CD4-positive, alpha-beta T cell (primary cell): ENCODE measurements at regions of chr6 and their contacts with region 1.

Region 1: DNA sequence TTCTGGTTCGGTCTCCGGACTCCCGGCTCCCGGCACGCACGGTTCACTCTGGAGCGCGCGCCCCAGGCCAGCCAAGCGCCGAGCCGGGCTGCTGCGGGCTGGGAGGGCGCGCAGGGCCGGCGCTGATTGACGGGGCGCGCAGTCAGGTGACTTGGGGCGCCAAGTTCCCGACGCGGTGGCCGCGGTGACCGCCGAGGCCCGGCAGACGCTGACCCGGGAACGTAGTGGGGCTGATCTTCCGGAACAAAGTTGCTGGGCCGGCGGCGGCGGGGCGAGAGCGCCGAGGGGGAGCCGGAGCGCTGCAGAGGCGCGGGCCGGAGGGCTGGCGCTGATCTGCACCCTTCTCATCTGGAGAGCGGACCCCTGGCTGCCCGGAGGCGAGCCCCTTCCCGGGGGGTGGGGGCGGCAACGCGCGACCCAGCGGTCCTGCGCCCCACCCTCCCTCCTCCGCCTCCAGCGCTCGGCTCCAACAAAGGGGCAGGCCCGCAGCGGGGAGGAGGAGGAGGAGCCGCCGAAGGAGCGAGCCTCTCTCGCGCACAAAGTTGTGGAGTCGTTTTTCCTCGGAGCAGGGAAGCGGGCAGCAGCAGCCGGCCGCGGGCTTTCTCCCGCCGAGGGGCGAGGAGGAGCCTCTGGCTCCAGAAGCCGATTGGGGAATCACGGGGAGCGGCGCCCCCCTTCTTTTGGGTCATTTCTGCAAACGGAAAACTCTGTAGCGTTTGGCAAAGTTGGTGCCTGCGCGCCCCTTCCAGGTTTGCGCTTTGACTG is at the start of gene UTRN:
- DNase-seq: peak in 10 of 14 experiments; percentile 4 to 63 (median 30)
- ATAC-seq: peak; percentile 52
- H3K4me3 ChIP-seq: peak within 1 kb of the TSS; percentile 91
- H3K4me3 Mint-ChIP-seq: peak within 1 kb of the TSS; percentile 95
- H3K27ac ChIP-seq: no peak within 1 kb of the TSS
- H3K27ac Mint-ChIP-seq: no peak within 1 kb of the TSS
- H3K4me1 ChIP-seq: peaks cover 23% of the 10 kb centered on the region
- H3K4me1 Mint-ChIP-seq: peaks cover 19% of the 10 kb centered on the region
- H3K27me3 ChIP-seq: no peaks in the 10 kb centered on the region
- H3K27me3 Mint-ChIP-seq: peaks cover 36% of the 10 kb centered on the region
- CTCF ChIP-seq: no peak
- total RNA-seq, gene UTRN: 143 to 153 TPM

Region 2: DNA sequence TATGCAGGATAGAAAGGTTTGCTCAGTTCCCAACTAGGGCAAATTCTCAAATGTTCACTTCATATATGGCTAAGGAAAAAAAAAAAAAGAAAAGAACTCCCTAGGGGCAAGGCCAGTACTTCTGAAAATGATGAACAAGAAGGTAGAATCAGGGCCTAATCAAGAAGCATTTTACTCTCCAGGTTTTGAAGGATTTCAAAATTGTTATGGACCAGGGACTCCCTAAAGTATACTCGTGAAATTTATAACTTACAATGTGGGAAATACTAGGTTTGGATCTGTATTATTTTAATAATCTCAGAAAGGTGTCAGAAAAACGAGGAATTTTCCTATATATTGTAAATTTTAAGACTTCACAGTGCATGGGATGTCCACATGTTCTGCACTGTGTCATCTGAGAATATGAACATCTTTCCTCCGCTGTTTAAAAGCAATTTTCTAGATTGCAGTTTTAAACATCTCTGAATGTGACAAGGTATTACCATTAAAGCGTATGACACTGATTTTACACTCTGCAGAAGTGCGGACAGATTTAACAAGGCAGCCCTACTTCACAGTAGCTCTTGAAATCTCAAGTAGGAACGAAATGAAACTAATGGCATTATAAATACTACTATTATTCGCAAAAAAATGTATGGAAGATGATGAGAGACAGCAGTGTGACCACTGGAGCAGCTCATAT is 290.9 kb before region 1 on chr6:
- CTCF ChIA-PET with region 1: no interaction called
- POLR2A ChIA-PET with region 1: no interaction called
- intact Hi-C with region 1: no loop called
- DNase-seq: no peak
- ATAC-seq: no peak
- H3K4me3 ChIP-seq: no peak overlapping the region
- H3K4me3 Mint-ChIP-seq: no peak overlapping the region
- H3K27ac ChIP-seq: no peak overlapping the region
- H3K27ac Mint-ChIP-seq: no peak overlapping the region
- H3K4me1 ChIP-seq: no peaks in the 10 kb centered on the region
- H3K4me1 Mint-ChIP-seq: no peaks in the 10 kb centered on the region
- H3K27me3 ChIP-seq: no peaks in the 10 kb centered on the region
- H3K27me3 Mint-ChIP-seq: no peaks in the 10 kb centered on the region
- CTCF ChIP-seq: no peak

Region 3: DNA sequence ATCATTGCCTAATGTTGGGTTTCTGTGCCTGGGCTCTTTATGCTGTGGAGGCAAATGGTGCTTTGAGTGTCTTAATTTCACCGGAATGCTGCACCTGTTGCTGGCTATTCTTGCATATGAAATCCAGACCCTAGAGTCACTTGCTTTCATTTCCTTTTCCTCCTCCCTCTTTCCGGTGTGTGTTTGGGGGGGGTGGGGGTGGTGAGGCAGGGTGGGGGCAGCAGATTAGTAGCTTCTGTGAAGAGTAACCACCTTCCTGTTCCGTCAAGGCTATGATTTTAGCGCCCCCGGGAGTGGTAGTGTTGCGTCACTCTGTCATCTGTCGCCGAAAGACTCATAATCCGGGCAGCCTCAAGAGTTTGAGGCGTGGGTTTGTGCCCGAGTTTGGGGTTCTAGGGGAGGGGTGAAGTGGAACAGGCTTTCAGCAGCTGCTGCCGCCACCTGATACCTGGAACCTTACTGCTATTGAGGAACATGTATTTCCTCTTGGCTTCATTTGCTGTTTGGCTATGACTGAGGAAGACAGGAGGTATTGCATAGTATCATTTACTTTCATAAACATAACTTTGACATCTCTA is 49.3 kb after region 1 on chr6:
- CTCF ChIA-PET with region 1: interaction called, 3 read pairs
- POLR2A ChIA-PET with region 1: no interaction called
- intact Hi-C with region 1: loop called (anchors 5 kb)
- DNase-seq: peak; percentile 37 to 93 (median 66)
- ATAC-seq: peak; percentile 93
- H3K4me3 ChIP-seq: peak overlapping the region; percentile 55
- H3K4me3 Mint-ChIP-seq: peak overlapping the region; percentile 85
- H3K27ac ChIP-seq: peak overlapping the region; percentile 44 to 75
- H3K27ac Mint-ChIP-seq: peak overlapping the region; percentile 85
- H3K4me1 ChIP-seq: peaks cover 36% of the 10 kb centered on the region
- H3K4me1 Mint-ChIP-seq: peaks cover 64% of the 10 kb centered on the region
- H3K27me3 ChIP-seq: no peaks in the 10 kb centered on the region
- H3K27me3 Mint-ChIP-seq: no peaks in the 10 kb centered on the region
- CTCF ChIP-seq: no peak

Region 4: GRCh38 chr6:144343701-144344428 is 58.9 kb after region 1 on chr6:
- CTCF ChIA-PET with region 1: interaction called, 3 read pairs
- POLR2A ChIA-PET with region 1: interaction called, 10 read pairs
- intact Hi-C with region 1: no loop called
- DNase-seq: peak in 11 of 14 experiments; percentile 30 to 91 (median 48)
- ATAC-seq: peak; percentile 74
- H3K4me3 ChIP-seq: peak overlapping the region; percentile 72
- H3K4me3 Mint-ChIP-seq: peak overlapping the region; percentile 88
- H3K27ac ChIP-seq: peak overlapping the region; percentile 56 to 75
- H3K27ac Mint-ChIP-seq: peak overlapping the region; percentile 89
- H3K4me1 ChIP-seq: peaks cover 58% of the 10 kb centered on the region
- H3K4me1 Mint-ChIP-seq: peaks cover 73% of the 10 kb centered on the region
- H3K27me3 ChIP-seq: no peaks in the 10 kb centered on the region
- H3K27me3 Mint-ChIP-seq: no peaks in the 10 kb centered on the region
- CTCF ChIP-seq: no peak

Region 5: GRCh38 chr6:144349690-144350527 is 64.9 kb after region 1 on chr6:
- CTCF ChIA-PET with region 1: interaction called, 3 read pairs
- POLR2A ChIA-PET with region 1: no interaction called
- intact Hi-C with region 1: loop called in 1 of 2 experiments (anchors 5 kb)
- DNase-seq: peak in 4 of 14 experiments; percentile 19 to 71 (median 62)
- ATAC-seq: peak; percentile 65
- H3K4me3 ChIP-seq: peak overlapping the region; percentile 42
- H3K4me3 Mint-ChIP-seq: peak overlapping the region; percentile 85
- H3K27ac ChIP-seq: peak overlapping the region; percentile 81 to 82
- H3K27ac Mint-ChIP-seq: peak overlapping the region; percentile 89
- H3K4me1 ChIP-seq: peaks cover 83% of the 10 kb centered on the region
- H3K4me1 Mint-ChIP-seq: peaks cover 86% of the 10 kb centered on the region
- H3K27me3 ChIP-seq: no peaks in the 10 kb centered on the region
- H3K27me3 Mint-ChIP-seq: no peaks in the 10 kb centered on the region
- CTCF ChIP-seq: no peak

Region 6: GRCh38 chr6:144411332-144412190 is 126.6 kb after region 1 on chr6:
- CTCF ChIA-PET with region 1: no interaction called
- POLR2A ChIA-PET with region 1: no interaction called
- intact Hi-C with region 1: loop called in 1 of 2 experiments (anchors 10 kb)
- DNase-seq: peak in 1 of 14 experiments; percentile 23
- ATAC-seq: peak; percentile 43
- H3K4me3 ChIP-seq: no peak overlapping the region
- H3K4me3 Mint-ChIP-seq: peak overlapping the region; percentile 61
- H3K27ac ChIP-seq: no peak overlapping the region
- H3K27ac Mint-ChIP-seq: peak overlapping the region; percentile 67
- H3K4me1 ChIP-seq: peaks cover 16% of the 10 kb centered on the region
- H3K4me1 Mint-ChIP-seq: peaks cover 75% of the 10 kb centered on the region
- H3K27me3 ChIP-seq: no peaks in the 10 kb centered on the region
- H3K27me3 Mint-ChIP-seq: no peaks in the 10 kb centered on the region
- CTCF ChIP-seq: no peak

Region 7: DNA sequence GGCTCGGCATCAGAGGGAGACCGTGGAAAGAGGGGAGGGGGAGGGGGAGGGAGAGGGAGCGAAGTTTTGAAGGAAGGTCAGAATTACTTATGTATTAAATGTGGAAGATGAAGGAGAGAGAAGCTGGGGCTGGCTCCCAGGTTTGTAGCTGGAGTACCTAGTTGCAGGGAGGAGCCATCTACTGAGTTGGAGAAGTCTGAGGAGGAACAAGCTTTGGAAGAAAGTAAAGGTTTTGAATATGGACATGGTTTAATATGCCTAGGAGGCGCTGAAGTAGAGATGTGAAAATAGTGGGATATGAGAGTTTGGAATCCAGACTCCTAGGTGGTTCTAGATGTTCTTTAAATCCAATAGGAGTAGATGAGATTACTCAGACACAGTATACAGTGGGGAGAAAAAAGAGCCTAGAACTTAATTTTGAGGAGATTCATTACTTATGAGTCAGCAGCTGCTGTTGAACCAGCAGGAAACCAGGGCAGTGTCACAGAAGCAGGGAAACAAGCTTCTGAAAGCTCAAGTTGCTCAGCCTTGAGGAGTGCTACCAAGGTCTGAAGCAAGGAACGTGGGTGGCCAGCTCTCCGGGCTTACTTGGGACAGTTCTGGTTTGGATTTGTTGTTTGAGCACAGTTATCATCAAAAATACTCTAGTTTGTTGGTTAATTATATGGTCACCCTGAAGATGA is 149.5 kb after region 1 on chr6:
- CTCF ChIA-PET with region 1: no interaction called
- POLR2A ChIA-PET with region 1: no interaction called
- intact Hi-C with region 1: no loop called
- DNase-seq: no peak
- ATAC-seq: no peak
- H3K4me3 ChIP-seq: no peak overlapping the region
- H3K4me3 Mint-ChIP-seq: no peak overlapping the region
- H3K27ac ChIP-seq: no peak overlapping the region
- H3K27ac Mint-ChIP-seq: no peak overlapping the region
- H3K4me1 ChIP-seq: no peaks in the 10 kb centered on the region
- H3K4me1 Mint-ChIP-seq: no peaks in the 10 kb centered on the region
- H3K27me3 ChIP-seq: no peaks in the 10 kb centered on the region
- H3K27me3 Mint-ChIP-seq: no peaks in the 10 kb centered on the region
- CTCF ChIP-seq: no peak